Right cardiac atrium (tissue), 5 donors: ENCODE measurements at regions of chr2 and their contacts with region 1.

Region 1: DNA sequence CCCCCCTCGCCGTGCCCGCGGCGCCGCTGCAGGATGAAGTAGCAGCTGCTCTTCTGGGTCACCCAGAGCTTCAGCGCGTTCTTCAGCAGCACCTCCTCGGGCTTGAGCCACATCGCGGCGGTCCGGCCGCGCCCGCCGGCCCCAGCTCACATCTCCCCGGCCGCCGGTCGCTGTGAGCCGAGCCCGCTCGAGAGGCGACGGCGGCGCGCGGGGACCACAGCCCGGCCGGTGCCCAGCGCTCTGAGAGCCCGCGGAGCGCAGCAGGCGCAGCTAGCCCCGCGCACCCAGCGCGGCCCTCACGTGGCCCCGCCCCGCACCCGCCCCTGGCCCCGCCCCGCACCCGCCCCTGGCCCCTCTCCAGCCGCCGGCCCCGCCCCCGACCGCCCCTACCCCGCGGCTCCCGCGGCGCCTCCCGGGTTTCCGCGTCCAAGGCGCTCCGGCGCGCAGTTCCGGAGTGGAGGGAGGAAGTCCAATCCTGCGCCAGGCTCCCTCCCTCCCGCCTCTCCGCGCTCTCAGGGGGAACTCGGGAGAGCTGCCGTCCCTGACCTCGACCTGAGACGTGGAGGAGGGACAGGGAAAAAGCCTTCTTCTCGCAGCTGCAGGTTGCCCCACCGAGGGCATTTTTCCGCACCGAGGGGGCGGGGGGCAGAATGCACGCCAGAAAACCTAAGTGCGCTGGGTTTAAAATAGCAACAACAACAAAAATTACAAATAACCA is at the start of gene TBC1D8:
- DNase-seq: peak; percentile 93 to 98 (median 95)
- ATAC-seq: peak; percentile 93 to 94
- H3K4me3 ChIP-seq: peak within 1 kb of the TSS; percentile 83
- H3K27ac ChIP-seq: peak within 1 kb of the TSS; percentile 87
- H3K4me1 ChIP-seq: peaks cover 10% of the 10 kb centered on the region
- H3K27me3 ChIP-seq: no peaks in the 10 kb centered on the region
- total RNA-seq, gene TBC1D8: 42.3 to 79.5 (median 52.2) TPM

Region 2: DNA sequence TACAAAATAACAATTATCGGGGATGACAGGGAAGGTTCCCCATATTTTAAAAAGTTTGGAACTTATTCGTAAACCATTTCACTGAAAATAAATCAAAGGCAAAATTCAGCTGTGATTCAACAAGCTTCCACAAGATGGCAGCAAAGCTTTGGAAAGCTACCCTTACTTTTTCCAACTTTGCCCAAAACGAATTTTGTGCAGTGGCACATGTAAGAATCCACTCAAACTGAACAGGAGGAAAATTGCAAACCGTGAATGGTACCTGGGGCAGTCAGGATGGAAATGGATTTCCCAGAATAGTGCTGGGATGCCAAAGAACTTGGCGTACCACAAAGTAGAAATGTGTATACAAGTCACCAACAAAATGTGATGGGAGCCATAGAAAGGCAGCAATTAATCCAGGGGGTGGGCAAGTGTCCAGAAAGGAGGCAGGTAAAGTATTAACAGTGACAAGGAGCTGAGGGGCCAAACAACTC is 138.6 kb before region 1 on chr2:
- intact Hi-C with region 1: loop called in 3 of 4 experiments (anchors 2 to 5 kb)
- DNase-seq: no peak
- ATAC-seq: peak in 1 of 2 donors; percentile 9
- H3K4me3 ChIP-seq: no peak overlapping the region
- H3K27ac ChIP-seq: no peak overlapping the region
- H3K4me1 ChIP-seq: no peaks in the 10 kb centered on the region
- H3K27me3 ChIP-seq: no peaks in the 10 kb centered on the region

Region 3: DNA sequence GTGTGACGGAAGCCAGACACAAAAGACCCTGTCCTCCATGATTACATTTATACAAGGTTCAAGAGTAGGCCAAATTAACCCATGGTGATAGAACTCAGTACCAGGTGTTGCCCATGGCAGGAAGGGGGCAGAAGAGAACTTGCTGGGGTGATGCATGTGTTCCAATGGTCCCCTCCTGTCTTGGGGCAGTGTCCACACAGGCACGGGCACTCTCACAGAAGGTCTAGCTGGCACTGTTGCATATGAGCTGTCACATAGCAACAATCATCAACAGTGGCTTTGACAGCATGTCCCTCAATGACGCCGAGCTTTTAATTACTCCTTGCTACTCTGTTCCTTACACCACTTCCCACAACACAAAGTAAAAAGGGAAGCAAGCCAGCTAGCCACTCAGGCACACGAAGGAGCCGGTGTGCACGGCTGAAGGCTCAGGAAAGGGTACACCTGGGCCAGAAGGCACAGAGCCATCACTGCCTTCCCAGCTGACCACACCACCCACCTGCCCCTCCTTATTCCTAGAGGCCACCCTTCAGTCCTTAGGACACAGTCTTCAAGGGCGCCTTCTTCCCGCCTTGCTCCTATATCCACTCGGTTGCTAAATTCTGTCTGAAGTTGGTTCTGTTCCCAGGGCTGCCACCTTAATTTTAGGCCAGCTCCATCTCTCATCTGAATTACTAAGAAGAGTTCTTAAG is 120.3 kb before region 1 on chr2:
- intact Hi-C with region 1: loop called (anchors 2 to 10 kb)
- DNase-seq: no peak
- ATAC-seq: peak; percentile 81 to 85
- H3K4me3 ChIP-seq: no peak overlapping the region
- H3K27ac ChIP-seq: peak overlapping the region; percentile 62
- H3K4me1 ChIP-seq: no peaks in the 10 kb centered on the region
- H3K27me3 ChIP-seq: no peaks in the 10 kb centered on the region

Region 4: DNA sequence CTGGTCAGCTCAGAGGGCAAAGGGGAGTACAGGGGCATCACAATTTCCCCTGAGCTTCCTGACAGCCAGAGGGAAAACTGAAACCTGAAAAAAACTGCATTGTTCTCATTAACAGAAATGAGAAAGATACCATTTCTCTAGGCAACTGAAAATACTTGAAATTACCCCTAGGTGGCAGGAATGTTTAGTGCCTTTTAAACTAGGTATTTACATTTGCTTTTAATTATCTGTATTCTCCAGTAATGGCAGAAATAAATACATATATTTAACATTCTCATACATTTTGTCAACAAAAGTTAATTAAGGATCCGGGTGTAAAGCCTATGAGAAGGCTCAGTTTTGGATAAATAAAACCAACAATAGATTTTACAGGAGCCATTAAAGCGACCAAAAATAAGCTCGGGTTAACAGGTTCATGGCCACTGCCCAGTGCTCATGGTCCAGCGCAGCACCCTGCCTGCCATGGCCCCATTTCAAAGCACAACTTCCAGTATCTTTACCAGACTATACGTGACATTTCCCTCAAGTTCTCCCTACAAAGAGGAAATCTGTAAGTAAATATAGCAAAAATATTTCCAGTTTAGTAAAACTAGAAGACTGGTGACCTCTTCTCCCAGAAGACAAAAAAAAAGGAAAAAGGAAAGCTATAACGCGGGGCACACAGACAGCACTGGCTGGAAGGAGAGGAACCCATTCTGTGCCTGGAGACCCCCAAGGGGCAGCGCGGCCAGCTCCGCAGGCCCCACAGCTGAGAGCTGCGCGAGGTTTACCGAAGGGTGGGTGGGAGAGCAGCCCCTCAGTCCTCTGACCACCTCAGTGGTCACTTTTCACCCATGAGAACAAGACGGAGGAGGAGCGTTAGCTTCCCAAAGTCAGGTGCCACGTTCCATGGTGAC is 114.5 kb before region 1 on chr2:
- intact Hi-C with region 1: loop called (anchors 2 to 10 kb)
- DNase-seq: no peak
- ATAC-seq: no peak
- H3K4me3 ChIP-seq: no peak overlapping the region
- H3K27ac ChIP-seq: no peak overlapping the region
- H3K4me1 ChIP-seq: no peaks in the 10 kb centered on the region
- H3K27me3 ChIP-seq: no peaks in the 10 kb centered on the region

Region 5: DNA sequence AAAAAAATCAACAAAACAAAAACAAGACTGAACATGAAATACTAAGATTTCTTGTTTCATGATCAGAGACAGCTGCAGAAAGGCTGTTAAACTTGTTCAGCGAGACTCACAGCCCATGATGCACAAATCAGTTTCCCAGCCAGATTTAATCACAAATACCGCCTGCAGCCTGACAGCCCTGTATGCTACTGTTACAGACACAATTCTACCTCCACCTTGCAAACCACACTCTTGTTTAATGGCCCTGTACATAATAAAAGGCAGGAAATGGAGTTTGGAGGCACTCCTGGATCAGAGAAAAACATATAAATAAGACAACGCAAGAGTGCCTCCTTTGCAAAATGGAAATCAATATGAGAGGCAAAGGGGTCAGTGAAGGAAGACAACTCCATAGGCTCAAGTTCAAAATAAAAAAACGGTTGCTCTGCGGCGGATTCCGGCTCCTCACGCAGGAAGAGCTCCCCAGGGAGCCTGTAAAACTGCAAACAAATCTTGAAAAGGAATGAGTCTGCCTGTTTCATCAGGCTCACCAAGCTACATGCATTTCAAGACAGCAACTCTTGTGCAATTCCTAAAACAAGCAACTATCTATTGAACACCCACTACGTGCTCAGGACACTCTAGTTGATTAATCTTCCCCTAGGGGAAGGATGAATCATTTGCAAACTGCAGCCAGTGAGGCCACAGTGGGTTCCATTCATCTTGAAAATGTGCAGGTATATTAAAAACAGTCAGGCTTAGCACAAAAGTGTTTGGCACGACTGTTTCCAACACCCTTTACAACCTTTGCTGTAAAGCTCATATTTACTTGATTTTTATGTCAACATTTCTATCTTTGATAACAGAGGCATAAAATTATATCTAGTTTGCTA is 37.7 kb before region 1 on chr2:
- intact Hi-C with region 1: loop called in 1 of 4 experiments (anchors 5 kb)
- DNase-seq: no peak
- ATAC-seq: no peak
- H3K4me3 ChIP-seq: no peak overlapping the region
- H3K27ac ChIP-seq: peak overlapping the region; percentile 77
- H3K4me1 ChIP-seq: peaks cover 39% of the 10 kb centered on the region
- H3K27me3 ChIP-seq: no peaks in the 10 kb centered on the region

Region 6: GRCh38 chr2:101223814-101224231 is 72.5 kb after region 1 on chr2:
- intact Hi-C with region 1: no loop called
- DNase-seq: no peak
- ATAC-seq: no peak
- H3K4me3 ChIP-seq: no peak overlapping the region
- H3K27ac ChIP-seq: no peak overlapping the region
- H3K4me1 ChIP-seq: no peaks in the 10 kb centered on the region
- H3K27me3 ChIP-seq: no peaks in the 10 kb centered on the region